ENCODE measurements at regions of chrX and their contacts with region 1.

Region 1: GRCh38 chrX:129925305-129926092 is 19.5 kb downstream of the UTP14A start:
- DNase-seq: peak; percentile 36 to 75 (median 50)
- ATAC-seq: peak; percentile 90
- H3K4me3 ChIP-seq: no peak overlapping the region
- H3K27ac ChIP-seq: no peak overlapping the region
- H3K4me1 ChIP-seq: no peaks in the 10 kb centered on the region
- H3K27me3 ChIP-seq: no peaks in the 10 kb centered on the region
- CTCF ChIP-seq: peak; percentile 59 to 78 (median 70)
- EP300 ChIP-seq: no peak
- POLR2A ChIP-seq: 0 out of 2 replicates have a peak, but pooled peaks have one; percentile 19
- RAD21 ChIP-seq: peak; percentile 80

Region 2: DNA sequence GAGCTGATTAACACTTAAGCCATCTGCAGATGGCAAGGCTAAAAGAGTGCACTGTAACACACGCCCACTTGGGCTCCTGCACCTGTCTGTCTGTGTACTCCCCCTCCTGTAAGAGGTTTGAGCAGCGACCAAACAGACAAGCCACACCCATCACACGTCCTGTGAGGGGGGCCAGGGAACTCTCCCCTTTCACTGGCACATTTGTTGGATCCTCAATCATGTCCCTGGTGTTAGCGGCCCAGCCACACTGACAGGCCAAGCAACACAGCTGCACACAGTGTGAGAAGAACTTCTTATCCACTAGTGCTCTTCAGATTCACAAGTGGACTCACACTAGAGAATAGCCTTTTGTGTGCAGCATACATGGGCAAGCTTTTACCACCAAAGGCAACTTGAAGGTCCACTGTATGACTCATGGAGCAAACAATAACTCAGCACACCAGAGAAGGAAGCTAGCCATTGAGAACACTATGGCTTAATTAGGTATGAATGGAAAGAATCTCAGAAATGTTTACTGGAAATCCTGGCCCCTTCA is 48.7 kb before region 1 on chrX:
- CTCF ChIA-PET with region 1: no interaction called
- POLR2A ChIA-PET with region 1: no interaction called
- in situ Hi-C with region 1: no loop called
- intact Hi-C with region 1: no loop called
- DNase-seq: no peak
- ATAC-seq: no peak
- H3K4me3 ChIP-seq: no peak overlapping the region
- H3K27ac ChIP-seq: no peak overlapping the region
- H3K4me1 ChIP-seq: no peaks in the 10 kb centered on the region
- H3K27me3 ChIP-seq: peaks cover 2 to 7% of the 10 kb centered on the region in 2 experiments; a peak in 2 of 5 replicates
- CTCF ChIP-seq: no peak
- EP300 ChIP-seq: no peak
- POLR2A ChIP-seq: no peak
- RAD21 ChIP-seq: no peak

Region 3: GRCh38 chrX:129982274-129983251 is 57.1 kb after region 1 on chrX and contains the start of gene BCORL1:
- CTCF ChIA-PET with region 1: no interaction called
- POLR2A ChIA-PET with region 1: no interaction called
- in situ Hi-C with region 1: no loop called
- intact Hi-C with region 1: no loop called
- DNase-seq: peak; percentile 87 to 96 (median 92)
- ATAC-seq: peak; percentile 94
- H3K4me3 ChIP-seq: no peak within 1 kb of the TSS
- H3K27ac ChIP-seq: peak within 1 kb of the TSS; percentile 61
- H3K4me1 ChIP-seq: peaks cover 10 to 29% of the 10 kb centered on the region in 2 experiments; a peak in 4 of 5 replicates
- H3K27me3 ChIP-seq: no peaks in the 10 kb centered on the region
- CTCF ChIP-seq: peak; percentile 23 to 26 (median 25); a peak in 2 of 6 replicates
- EP300 ChIP-seq: peak; percentile 31; the same call in 1 of the 2 replicates
- POLR2A ChIP-seq: peak; percentile 95
- RAD21 ChIP-seq: no peak
- polyA plus RNA-seq, gene BCORL1: 0.48 to 0.55 TPM

Region 4: GRCh38 chrX:130013661-130014060 is 88.2 kb after region 1 on chrX:
- CTCF ChIA-PET with region 1: no interaction called
- POLR2A ChIA-PET with region 1: no interaction called
- in situ Hi-C with region 1: no loop called
- intact Hi-C with region 1: no loop called
- DNase-seq: no peak
- ATAC-seq: no peak
- H3K4me3 ChIP-seq: no peak overlapping the region
- H3K27ac ChIP-seq: no peak overlapping the region
- H3K4me1 ChIP-seq: no peaks in the 10 kb centered on the region
- H3K27me3 ChIP-seq: no peaks in the 10 kb centered on the region
- CTCF ChIP-seq: no peak
- EP300 ChIP-seq: no peak
- POLR2A ChIP-seq: no peak
- RAD21 ChIP-seq: no peak

Region 5: DNA sequence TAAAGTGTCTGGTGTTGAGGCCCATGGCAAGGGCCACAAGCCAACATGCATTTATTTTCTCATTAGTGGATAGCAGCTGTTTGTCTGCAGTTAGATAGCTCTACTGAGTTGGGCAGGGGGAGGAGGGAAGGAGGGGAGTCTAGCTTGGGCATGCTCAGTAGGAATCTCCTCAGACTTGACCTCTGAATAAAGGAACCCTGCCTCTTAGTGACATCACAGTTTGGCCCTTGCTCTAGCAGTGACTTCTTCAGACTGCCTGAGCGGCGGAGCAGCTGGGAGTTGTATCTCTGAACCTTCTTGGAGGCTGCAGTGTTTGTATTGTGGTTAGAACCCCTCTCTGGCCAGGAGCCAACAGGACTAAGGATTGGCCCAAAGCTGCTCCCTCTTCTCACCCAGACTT is 114.3 kb after region 1 on chrX:
- CTCF ChIA-PET with region 1: no interaction called
- POLR2A ChIA-PET with region 1: interaction called, 3 read pairs
- in situ Hi-C with region 1: loop called (anchors 10 kb)
- intact Hi-C with region 1: no loop called
- DNase-seq: no peak
- ATAC-seq: peak; percentile 43; the same call in 1 of the 3 replicates
- H3K4me3 ChIP-seq: no peak overlapping the region
- H3K27ac ChIP-seq: no peak overlapping the region
- H3K4me1 ChIP-seq: no peaks in the 10 kb centered on the region
- H3K27me3 ChIP-seq: no peaks in the 10 kb centered on the region
- CTCF ChIP-seq: no peak
- EP300 ChIP-seq: no peak
- POLR2A ChIP-seq: no peak
- RAD21 ChIP-seq: no peak

Measured in K562 (cell line).